Activated naive CD8-positive, alpha-beta T cell treated with anti-CD3 and anti-CD28 coated beads, Interleukin-2, amount 10 ng/mL, durations not matched to agents 7 days and 5 days (primary cell): ENCODE measurements at regions of chr17 and their contacts with region 1.

Region 1: DNA sequence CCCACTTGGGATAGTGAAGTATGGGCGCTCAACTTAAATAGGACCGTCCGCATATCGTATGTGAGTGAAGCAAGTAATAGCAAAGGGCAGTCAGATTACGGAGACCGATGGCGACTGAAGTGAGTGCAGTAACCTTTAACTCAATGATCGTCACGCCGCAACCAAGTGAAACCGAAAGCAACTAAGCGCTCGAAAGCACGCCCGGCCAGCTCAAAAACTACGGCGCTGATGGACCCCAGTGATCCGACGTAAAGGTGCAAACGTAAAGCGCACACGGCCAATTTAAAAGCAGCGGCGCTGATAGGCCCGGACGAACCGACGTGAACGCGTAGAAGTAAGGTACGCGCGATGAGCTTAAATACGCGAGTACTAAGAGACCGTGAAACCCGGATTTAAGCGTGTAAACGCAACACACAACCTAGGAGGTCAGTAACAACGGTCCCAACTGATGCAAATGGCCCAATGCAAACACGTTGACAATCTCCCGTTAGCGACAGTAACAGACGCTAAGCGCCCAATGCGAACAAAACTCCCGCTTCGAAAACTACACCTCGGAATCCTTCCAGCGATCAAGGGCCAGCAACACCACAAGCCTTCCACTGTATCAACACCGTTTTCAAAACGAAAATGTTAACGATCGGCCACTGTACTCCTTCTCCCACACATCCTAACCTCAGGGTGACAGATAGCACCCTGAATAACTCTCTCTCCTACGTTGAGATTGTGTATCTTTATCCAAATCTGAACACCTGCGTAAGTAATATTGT is 37.9 kb upstream of the ARL4D start:
- DNase-seq: peak; percentile 85
- ATAC-seq: peak; percentile 88
- H3K4me3 Mint-ChIP-seq: peak overlapping the region; percentile 93
- H3K27ac Mint-ChIP-seq: peak overlapping the region; percentile 100
- H3K4me1 Mint-ChIP-seq: peaks cover 27% of the 10 kb centered on the region
- H3K27me3 Mint-ChIP-seq: no peaks in the 10 kb centered on the region

Region 2: GRCh38 chr17:42997984-42998938 is 362.7 kb before region 1 on chr17 and contains the start of gene RPL27:
- POLR2A ChIA-PET with region 1: interaction called, 12 read pairs
- DNase-seq: peak; percentile 91
- ATAC-seq: peak; percentile 98
- H3K4me3 Mint-ChIP-seq: peak within 1 kb of the TSS; percentile 92
- H3K27ac Mint-ChIP-seq: peak within 1 kb of the TSS; percentile 84
- H3K4me1 Mint-ChIP-seq: peaks cover 27% of the 10 kb centered on the region
- H3K27me3 Mint-ChIP-seq: no peaks in the 10 kb centered on the region
- total RNA-seq, gene RPL27: 1,039 to 1,066 TPM

Region 3: GRCh38 chr17:43024407-43025289 is 336.3 kb before region 1 on chr17 and contains the start of gene RND2:
- POLR2A ChIA-PET with region 1: interaction called, 11 read pairs
- DNase-seq: peak; percentile 73
- ATAC-seq: peak; percentile 61
- H3K4me3 Mint-ChIP-seq: peak within 1 kb of the TSS; percentile 87
- H3K27ac Mint-ChIP-seq: peak within 1 kb of the TSS; percentile 43
- H3K4me1 Mint-ChIP-seq: peaks cover 15% of the 10 kb centered on the region
- H3K27me3 Mint-ChIP-seq: peaks cover 28% of the 10 kb centered on the region
- total RNA-seq, gene RND2: 0.14 TPM in 1 of 2 experiments, not detected in the other

Region 4: DNA sequence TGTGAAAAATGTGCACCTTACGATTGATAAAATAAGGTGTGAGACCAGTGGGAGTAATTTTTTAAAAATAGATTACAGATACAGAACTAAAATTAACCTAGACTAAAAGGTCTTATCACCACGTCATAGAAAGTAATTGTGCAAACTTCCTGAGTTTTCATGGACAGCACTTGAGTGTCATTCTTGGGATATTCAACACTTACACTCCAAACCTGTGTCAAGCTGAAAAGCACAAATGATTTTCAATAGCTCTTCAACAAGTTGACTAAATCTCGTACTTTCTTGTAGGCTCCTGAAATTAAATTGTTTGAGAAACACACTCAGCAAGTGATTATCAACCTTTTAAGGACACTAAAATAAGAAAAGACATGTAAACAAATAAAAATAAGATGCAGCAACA is 256.3 kb before region 1 on chr17:
- POLR2A ChIA-PET with region 1: no interaction called
- DNase-seq: no peak
- ATAC-seq: no peak
- H3K4me3 Mint-ChIP-seq: no peak overlapping the region
- H3K27ac Mint-ChIP-seq: no peak overlapping the region
- H3K4me1 Mint-ChIP-seq: no peaks in the 10 kb centered on the region
- H3K27me3 Mint-ChIP-seq: no peaks in the 10 kb centered on the region

Region 5: DNA sequence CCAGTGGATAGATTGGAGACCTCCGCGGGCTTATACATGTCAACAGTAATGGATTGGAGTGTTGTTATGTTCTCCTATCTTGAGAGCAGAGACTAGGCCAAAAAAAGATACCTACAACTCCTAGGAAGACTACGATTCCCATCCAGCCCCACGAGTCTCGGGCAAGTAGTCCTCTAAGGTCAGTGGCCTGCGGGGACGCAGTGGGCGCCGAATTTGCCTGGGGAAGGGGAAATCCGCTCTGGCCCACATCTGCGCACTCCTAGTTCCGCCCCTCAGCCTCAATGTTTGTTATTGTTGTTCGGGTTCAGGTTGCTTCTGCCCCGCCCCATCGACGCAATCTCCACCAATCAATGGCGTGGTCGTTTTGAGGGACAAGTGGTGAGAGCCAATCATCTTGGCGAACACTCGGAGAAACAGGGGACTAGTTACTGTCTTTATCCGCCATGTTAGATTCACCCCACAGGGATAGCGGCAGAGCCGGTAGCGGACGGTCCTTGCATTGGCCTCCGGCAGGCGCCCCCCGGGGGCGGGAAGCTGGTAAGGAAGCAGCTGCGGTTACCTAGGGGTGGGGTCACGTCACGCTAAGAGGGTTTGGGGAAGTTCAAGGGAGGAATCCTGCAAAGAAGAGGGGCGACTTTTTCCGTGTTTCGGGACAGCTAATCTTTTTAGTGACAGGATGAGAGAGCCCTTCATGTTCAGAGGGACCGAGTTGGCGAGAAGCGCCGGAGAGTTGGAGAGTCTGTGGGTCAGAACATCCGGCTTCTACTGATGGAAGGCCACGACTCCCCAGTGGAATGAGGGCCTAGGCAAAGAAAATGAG is 189.9 kb before region 1 on chr17 and contains the start of gene NBR1:
- POLR2A ChIA-PET with region 1: interaction called, 11 read pairs
- DNase-seq: peak; percentile 89
- ATAC-seq: peak; percentile 86
- H3K4me3 Mint-ChIP-seq: no peak within 1 kb of the TSS
- H3K27ac Mint-ChIP-seq: no peak within 1 kb of the TSS
- H3K4me1 Mint-ChIP-seq: peaks cover 30% of the 10 kb centered on the region
- H3K27me3 Mint-ChIP-seq: no peaks in the 10 kb centered on the region
- total RNA-seq, gene NBR1: 60.5 to 67.4 TPM

Region 6: GRCh38 chr17:43388359-43389045 is 27.6 kb after region 1 on chr17:
- POLR2A ChIA-PET with region 1: interaction called, 168 read pairs
- DNase-seq: peak; percentile 96
- ATAC-seq: peak; percentile 61
- H3K4me3 Mint-ChIP-seq: peak overlapping the region; percentile 90
- H3K27ac Mint-ChIP-seq: peak overlapping the region; percentile 98
- H3K4me1 Mint-ChIP-seq: peaks cover 13% of the 10 kb centered on the region
- H3K27me3 Mint-ChIP-seq: no peaks in the 10 kb centered on the region

Region 7: DNA sequence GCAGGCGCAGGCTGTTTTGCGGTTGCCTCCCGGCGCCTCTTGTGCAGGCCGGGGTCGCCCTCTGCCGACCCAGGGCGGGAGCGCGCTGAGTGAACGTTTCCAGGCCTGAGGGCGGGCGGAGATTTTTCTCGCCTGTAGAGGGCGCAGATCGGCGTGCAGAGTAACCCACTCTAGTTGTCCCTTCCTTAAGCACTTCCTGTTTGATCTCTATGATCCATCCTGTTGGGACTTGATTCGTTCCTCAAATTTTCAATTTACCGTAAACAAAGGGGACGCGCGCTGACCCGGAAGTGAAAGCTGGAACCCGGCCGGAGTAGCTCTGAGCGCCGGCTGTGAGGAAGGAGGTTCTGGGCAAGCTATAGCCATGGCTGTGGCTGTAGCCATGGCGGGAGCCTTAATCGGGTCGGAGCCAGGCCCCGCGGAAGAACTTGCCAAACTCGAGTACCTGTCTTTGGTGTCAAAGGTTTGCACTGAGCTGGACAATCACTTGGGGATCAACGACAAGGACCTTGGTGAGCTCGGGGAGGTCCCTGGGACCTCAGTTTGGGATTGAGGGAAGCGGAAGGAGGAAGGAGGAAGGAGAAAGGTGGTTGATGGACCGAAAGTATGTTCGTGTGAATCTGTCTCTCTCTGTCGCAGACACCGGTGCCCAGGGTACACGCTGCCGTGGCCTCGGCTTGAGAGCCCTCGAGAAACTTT is 122.9 kb after region 1 on chr17 and contains the start of gene DHX8:
- POLR2A ChIA-PET with region 1: interaction called, 75 read pairs
- DNase-seq: peak; percentile 99
- ATAC-seq: peak; percentile 98
- H3K4me3 Mint-ChIP-seq: peak within 1 kb of the TSS; percentile 88
- H3K27ac Mint-ChIP-seq: peak within 1 kb of the TSS; percentile 90
- H3K4me1 Mint-ChIP-seq: peaks cover 16% of the 10 kb centered on the region
- H3K27me3 Mint-ChIP-seq: peaks cover 3% of the 10 kb centered on the region
- total RNA-seq, gene DHX8: 60.6 to 62.9 TPM